Prostate gland (tissue), 2 donors: ENCODE measurements at regions of chr15 and their contacts with region 1.

Region 1: GRCh38 chr15:36645106-36645505 is 65.7 kb downstream of the CDIN1 start:
- DNase-seq: no peak
- H3K4me3 ChIP-seq: no peak overlapping the region
- H3K27ac ChIP-seq: no peak overlapping the region
- H3K4me1 ChIP-seq: no peaks in the 10 kb centered on the region
- H3K27me3 ChIP-seq: no peaks in the 10 kb centered on the region
- CTCF ChIP-seq: peak in 2 of 4 experiments; percentile 42 to 45
- POLR2A ChIP-seq: no peak

Region 2: GRCh38 chr15:36479200-36479896 is 165.8 kb before region 1 on chr15:
- intact Hi-C with region 1: no loop called
- DNase-seq: no peak
- H3K4me3 ChIP-seq: no peak overlapping the region
- H3K27ac ChIP-seq: no peak overlapping the region
- H3K4me1 ChIP-seq: no peaks in the 10 kb centered on the region
- H3K27me3 ChIP-seq: no peaks in the 10 kb centered on the region
- CTCF ChIP-seq: no peak
- POLR2A ChIP-seq: no peak

Region 3: GRCh38 chr15:36501063-36501678 is 143.9 kb before region 1 on chr15:
- intact Hi-C with region 1: loop called (anchors 10 kb)
- DNase-seq: peak; percentile 46
- H3K4me3 ChIP-seq: no peak overlapping the region
- H3K27ac ChIP-seq: no peak overlapping the region
- H3K4me1 ChIP-seq: no peaks in the 10 kb centered on the region
- H3K27me3 ChIP-seq: no peaks in the 10 kb centered on the region
- CTCF ChIP-seq: peak; percentile 41 to 71 (median 58)
- POLR2A ChIP-seq: no peak

Region 4: GRCh38 chr15:36529296-36530011 is 115.7 kb before region 1 on chr15:
- intact Hi-C with region 1: no loop called
- DNase-seq: no peak
- H3K4me3 ChIP-seq: no peak overlapping the region
- H3K27ac ChIP-seq: no peak overlapping the region
- H3K4me1 ChIP-seq: no peaks in the 10 kb centered on the region
- H3K27me3 ChIP-seq: no peaks in the 10 kb centered on the region
- CTCF ChIP-seq: no peak
- POLR2A ChIP-seq: no peak

Region 5: GRCh38 chr15:36877796-36878683 is 232.9 kb after region 1 on chr15:
- intact Hi-C with region 1: loop called (anchors 10 kb)
- DNase-seq: no peak
- H3K4me3 ChIP-seq: no peak overlapping the region
- H3K27ac ChIP-seq: no peak overlapping the region
- H3K4me1 ChIP-seq: peaks cover 3% of the 10 kb centered on the region
- H3K27me3 ChIP-seq: no peaks in the 10 kb centered on the region
- CTCF ChIP-seq: no peak
- POLR2A ChIP-seq: no peak

Region 6: DNA sequence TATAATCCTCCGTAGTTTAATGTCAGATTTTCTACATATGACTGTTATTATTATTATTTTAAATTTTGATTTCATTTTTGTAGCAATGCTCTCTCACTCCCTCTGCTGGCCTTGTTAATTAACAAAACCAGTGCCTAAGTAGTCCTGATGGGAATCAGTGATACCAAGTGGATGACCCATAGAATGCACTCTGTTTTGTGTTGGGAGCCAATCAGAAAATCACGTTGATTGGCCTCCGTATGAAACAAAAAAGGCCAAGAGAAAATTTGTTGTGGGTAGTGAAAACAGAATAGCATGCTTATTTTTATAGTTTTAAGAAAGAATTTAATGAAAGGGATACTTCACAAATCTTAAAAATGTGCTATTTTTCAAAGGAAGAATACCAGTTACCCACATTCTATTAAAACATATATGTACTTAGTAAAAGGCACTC is 489.6 kb after region 1 on chr15:
- intact Hi-C with region 1: loop called (anchors 10 kb)
- DNase-seq: no peak
- H3K4me3 ChIP-seq: no peak overlapping the region
- H3K27ac ChIP-seq: no peak overlapping the region
- H3K4me1 ChIP-seq: no peaks in the 10 kb centered on the region
- H3K27me3 ChIP-seq: no peaks in the 10 kb centered on the region
- CTCF ChIP-seq: peak; percentile 32 to 76 (median 66)
- POLR2A ChIP-seq: no peak